ENCODE measurements at regions of chr12 and their contacts with region 1.

Region 1: GRCh38 chr12:45215419-45216229 is at the start of gene ANO6:
- DNase-seq: no peak
- ATAC-seq: peak; percentile 88
- H3K4me3 ChIP-seq: peak within 1 kb of the TSS; percentile 80 to 85
- H3K27ac ChIP-seq: peak within 1 kb of the TSS; percentile 98
- H3K4me1 ChIP-seq: peaks cover 24% of the 10 kb centered on the region
- H3K27me3 ChIP-seq: no peaks in the 10 kb centered on the region
- CTCF ChIP-seq: peak; percentile 62
- total RNA-seq, gene ANO6: 120 TPM

Region 2: GRCh38 chr12:45257185-45257930 is 41.7 kb after region 1 on chr12:
- CTCF ChIA-PET with region 1: no interaction called
- POLR2A ChIA-PET with region 1: no interaction called
- in situ Hi-C with region 1: no loop called
- intact Hi-C with region 1: no loop called
- DNase-seq: no peak
- ATAC-seq: no peak
- H3K4me3 ChIP-seq: no peak overlapping the region
- H3K27ac ChIP-seq: peak overlapping the region; percentile 88
- H3K4me1 ChIP-seq: peaks cover 62% of the 10 kb centered on the region
- H3K27me3 ChIP-seq: no peaks in the 10 kb centered on the region
- CTCF ChIP-seq: peak; percentile 5; the same call in 1 of the 2 replicates

Region 3: GRCh38 chr12:45351921-45352670 is 136.5 kb after region 1 on chr12:
- CTCF ChIA-PET with region 1: interaction called, 13 read pairs
- POLR2A ChIA-PET with region 1: no interaction called
- in situ Hi-C with region 1: no loop called
- intact Hi-C with region 1: no loop called
- DNase-seq: no peak
- ATAC-seq: no peak
- H3K4me3 ChIP-seq: no peak overlapping the region
- H3K27ac ChIP-seq: no peak overlapping the region
- H3K4me1 ChIP-seq: peaks cover 15% of the 10 kb centered on the region
- H3K27me3 ChIP-seq: no peaks in the 10 kb centered on the region
- CTCF ChIP-seq: no peak